ENCODE measurements at regions of chr19 and their contacts with region 1.

Region 1: DNA sequence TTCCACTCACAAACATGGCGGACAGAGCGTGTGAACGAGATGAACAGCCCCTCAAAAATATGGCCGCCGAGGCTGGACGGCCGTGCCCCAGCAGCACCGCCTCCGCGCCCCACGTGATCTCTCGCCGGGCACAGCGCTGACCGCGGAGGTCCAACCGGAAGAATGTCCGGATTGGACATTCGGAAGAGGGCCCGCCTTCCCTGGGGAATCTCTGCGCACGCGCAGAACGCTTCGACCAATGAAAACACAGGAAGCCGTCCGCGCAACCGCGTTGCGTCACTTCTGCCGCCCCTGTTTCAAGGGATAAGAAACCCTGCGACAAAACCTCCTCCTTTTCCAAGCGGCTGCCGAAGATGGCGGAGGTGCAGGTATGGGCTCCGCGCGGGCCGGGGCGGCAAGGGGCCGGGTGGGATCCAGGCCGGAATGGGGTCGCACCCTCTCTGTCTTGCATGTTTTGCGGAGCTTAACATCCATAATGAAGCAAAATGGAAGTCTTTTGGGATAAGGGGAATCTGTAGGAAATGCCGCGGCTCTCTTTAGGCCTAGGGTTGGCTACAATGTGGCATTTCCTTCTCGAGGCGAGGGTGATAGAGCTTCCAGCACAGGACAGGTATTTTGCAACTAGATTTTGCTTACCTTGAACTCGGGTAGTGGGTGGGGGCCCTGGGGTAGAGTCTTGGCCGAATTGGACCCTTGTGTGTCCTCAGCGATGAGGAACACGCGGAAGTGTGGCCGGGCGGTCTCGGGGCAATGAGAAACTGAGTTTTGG is at the start of gene RPL13A:
- DNase-seq: peak; percentile 99 to 100
- H3K4me3 ChIP-seq: peak within 1 kb of the TSS; percentile 96 to 100 (median 100)
- H3K27ac ChIP-seq: peak within 1 kb of the TSS; percentile 98
- H3K4me1 ChIP-seq: peaks cover 0 to 8% (median 2%) of the 10 kb centered on the region in 4 experiments; a peak in 3 of 7 replicates
- H3K27me3 ChIP-seq: no peaks in the 10 kb centered on the region
- CTCF ChIP-seq: no peak
- EP300 ChIP-seq: no peak
- POLR2A ChIP-seq: peak; percentile 98 to 99
- RAD21 ChIP-seq: no peak
- total RNA-seq, gene RPL13A: 3,305 and 3,520 TPM in 2 replicates

Region 2: GRCh38 chr19:49451430-49452181 is 35.9 kb before region 1 on chr19 and contains the start of gene PIH1D1:
- CTCF ChIA-PET with region 1: no interaction called
- POLR2A ChIA-PET with region 1: interaction called, 17 read pairs
- DNase-seq: peak; percentile 93 to 95
- H3K4me3 ChIP-seq: peak within 1 kb of the TSS; percentile 86 to 99 (median 96)
- H3K27ac ChIP-seq: peak within 1 kb of the TSS; percentile 69
- H3K4me1 ChIP-seq: peaks cover 0 to 14% (median 10%) of the 10 kb centered on the region in 4 experiments; a peak in 6 of 7 replicates
- H3K27me3 ChIP-seq: no peaks in the 10 kb centered on the region
- CTCF ChIP-seq: no peak
- EP300 ChIP-seq: no peak
- POLR2A ChIP-seq: peak; percentile 51 to 86
- RAD21 ChIP-seq: no peak
- total RNA-seq, gene PIH1D1: 146 and 155 TPM in 2 replicates

Region 3: DNA sequence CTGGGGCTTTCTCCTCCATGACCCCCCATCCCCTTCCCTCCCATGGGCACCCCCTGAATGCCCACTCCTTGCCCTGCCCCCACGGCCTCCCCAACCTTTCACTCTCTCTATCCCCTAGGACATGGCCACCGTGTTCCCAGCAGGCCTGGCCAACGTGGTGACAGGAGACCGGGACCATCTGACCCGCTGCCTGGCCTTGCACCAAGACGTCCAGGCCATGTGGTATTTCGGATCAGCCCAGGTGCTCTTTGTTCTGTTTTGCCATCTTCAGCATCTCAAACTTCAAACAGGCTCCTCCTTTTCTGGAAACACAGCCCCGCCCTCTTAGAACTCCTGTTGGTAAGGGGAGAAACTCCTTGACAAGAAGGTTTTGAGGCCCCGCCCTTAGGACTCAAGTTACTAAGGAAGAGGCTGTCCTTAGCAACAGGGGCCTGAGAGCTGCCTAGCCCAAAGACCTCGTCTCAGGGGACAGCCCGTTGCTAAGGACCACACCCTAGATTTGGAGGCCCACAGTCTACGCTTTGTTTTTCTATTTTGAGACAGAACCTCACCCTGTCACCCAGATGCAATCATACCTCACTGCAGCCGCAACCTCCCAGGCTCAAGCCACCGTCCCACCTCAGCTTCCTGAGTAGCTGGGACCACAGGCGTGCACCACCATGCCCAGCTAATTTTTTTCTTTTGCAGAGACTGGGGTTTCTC is 18.6 kb before region 1 on chr19:
- CTCF ChIA-PET with region 1: interaction called, 22 read pairs
- POLR2A ChIA-PET with region 1: interaction called, 50 read pairs
- DNase-seq: peak in 1 of 2 experiments; percentile 79
- H3K4me3 ChIP-seq: no peak overlapping the region
- H3K27ac ChIP-seq: peak overlapping the region; percentile 36; the same call in 1 of the 2 replicates
- H3K4me1 ChIP-seq: peaks cover 0 to 8% (median 3%) of the 10 kb centered on the region in 4 experiments; a peak in 6 of 7 replicates
- H3K27me3 ChIP-seq: no peaks in the 10 kb centered on the region
- CTCF ChIP-seq: no peak
- EP300 ChIP-seq: no peak
- POLR2A ChIP-seq: no peak
- RAD21 ChIP-seq: no peak

Region 4: DNA sequence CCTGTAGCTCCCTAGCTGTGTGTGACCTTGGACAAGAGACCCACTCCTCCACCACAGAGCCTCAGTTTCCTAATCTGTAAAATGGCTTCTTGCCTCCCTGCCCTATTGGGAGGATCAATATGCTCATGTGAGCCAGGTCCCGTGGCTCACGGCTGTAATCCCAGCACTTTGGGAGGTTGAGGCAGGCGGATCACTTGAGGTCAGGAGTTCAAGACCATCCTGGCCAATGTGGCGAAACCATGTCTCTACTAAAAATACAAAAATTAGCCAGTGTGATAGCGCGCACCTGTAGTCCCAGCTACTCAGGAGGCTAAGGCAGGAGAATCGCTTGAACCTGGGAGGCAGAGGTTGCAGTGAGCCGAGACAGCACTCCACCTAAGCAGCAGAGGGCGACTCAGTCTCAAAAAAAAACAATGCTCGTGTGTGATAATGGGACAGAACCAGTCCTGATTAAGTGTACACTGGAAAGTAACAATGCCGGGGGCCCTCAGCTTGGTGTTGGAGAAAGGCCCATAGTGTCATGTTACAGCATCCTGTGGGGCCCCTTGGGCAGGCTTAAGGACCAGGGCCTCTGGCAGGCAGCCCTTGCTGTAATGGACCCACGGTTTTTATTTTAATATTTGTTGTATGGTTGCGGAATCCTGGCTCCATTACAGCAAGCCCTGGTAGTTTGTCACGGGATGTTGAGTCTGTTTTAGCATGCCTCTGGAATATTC is 15.6 kb after region 1 on chr19:
- CTCF ChIA-PET with region 1: interaction called, 7 read pairs
- POLR2A ChIA-PET with region 1: interaction called, 18 read pairs
- DNase-seq: no peak
- H3K4me3 ChIP-seq: no peak overlapping the region
- H3K27ac ChIP-seq: no peak overlapping the region
- H3K4me1 ChIP-seq: peaks cover 0 to 22% (median 17%) of the 10 kb centered on the region in 4 experiments; a peak in 6 of 7 replicates
- H3K27me3 ChIP-seq: no peaks in the 10 kb centered on the region
- CTCF ChIP-seq: peak; percentile 40 to 45 (median 41); a peak in 3 of 4 replicates
- EP300 ChIP-seq: no peak
- POLR2A ChIP-seq: no peak
- RAD21 ChIP-seq: peak; percentile 55 to 59

Region 5: GRCh38 chr19:49533551-49534488 is 46.4 kb after region 1 on chr19:
- CTCF ChIA-PET with region 1: no interaction called
- POLR2A ChIA-PET with region 1: interaction called, 17 read pairs
- DNase-seq: peak in 1 of 2 experiments; percentile 96
- H3K4me3 ChIP-seq: peak overlapping the region; percentile 60 to 81 (median 72)
- H3K27ac ChIP-seq: no peak overlapping the region
- H3K4me1 ChIP-seq: peaks cover 0 to 9% (median 1%) of the 10 kb centered on the region in 4 experiments; a peak in 5 of 7 replicates
- H3K27me3 ChIP-seq: no peaks in the 10 kb centered on the region; a peak in 1 of 7 replicates
- CTCF ChIP-seq: peak; percentile 22 to 76 (median 53)
- EP300 ChIP-seq: no peak
- POLR2A ChIP-seq: no peak
- RAD21 ChIP-seq: no peak

Region 6: GRCh38 chr19:49580264-49581006 is 93.0 kb after region 1 on chr19 and contains the start of gene NOSIP:
- CTCF ChIA-PET with region 1: no interaction called
- POLR2A ChIA-PET with region 1: interaction called, 15 read pairs
- DNase-seq: peak; percentile 89 to 95
- H3K4me3 ChIP-seq: peak within 1 kb of the TSS; percentile 87 to 99 (median 92)
- H3K27ac ChIP-seq: peak within 1 kb of the TSS; percentile 51
- H3K4me1 ChIP-seq: peaks cover 2 to 19% (median 8%) of the 10 kb centered on the region in 4 experiments
- H3K27me3 ChIP-seq: no peaks in the 10 kb centered on the region
- CTCF ChIP-seq: no peak
- EP300 ChIP-seq: 0 out of 3 replicates have a peak, but pooled peaks of 1 of the 2 experiments have one; percentile 47
- POLR2A ChIP-seq: peak; percentile 95 to 99
- RAD21 ChIP-seq: no peak
- total RNA-seq, gene NOSIP: 85.1 and 93.8 TPM in 2 replicates

Region 7: DNA sequence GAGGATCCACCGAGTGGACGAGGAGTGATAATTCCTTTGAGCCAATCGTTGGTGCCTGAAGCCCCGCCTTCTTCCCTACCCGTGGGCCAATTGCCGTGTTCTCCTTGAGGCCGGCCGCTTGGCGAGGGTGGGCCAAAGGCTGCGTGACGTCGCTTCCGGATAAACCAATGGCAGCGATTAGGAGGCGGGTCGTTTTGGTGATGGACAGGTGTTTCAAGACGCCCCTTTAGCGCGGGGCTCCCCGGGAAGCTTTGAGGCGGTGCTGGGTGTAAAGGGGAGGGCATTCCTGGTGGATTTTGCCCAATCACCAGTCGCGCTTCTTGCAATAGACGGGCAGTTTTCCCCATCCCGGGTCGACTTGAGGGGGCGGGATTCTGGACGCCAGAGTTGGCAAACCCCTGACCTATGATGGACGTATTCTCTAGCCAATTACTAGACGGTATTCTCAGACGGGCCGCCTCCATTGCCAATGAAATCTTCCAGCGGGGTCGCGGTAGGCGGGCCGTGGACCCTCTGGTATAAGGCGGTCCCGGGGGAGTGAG is 189.3 kb after region 1 on chr19:
- CTCF ChIA-PET with region 1: no interaction called
- POLR2A ChIA-PET with region 1: interaction called, 11 read pairs
- DNase-seq: peak; percentile 99 to 100
- H3K4me3 ChIP-seq: peak overlapping the region; percentile 82 to 99 (median 86)
- H3K27ac ChIP-seq: peak overlapping the region; percentile 100
- H3K4me1 ChIP-seq: peaks cover 2 to 19% (median 11%) of the 10 kb centered on the region in 4 experiments
- H3K27me3 ChIP-seq: no peaks in the 10 kb centered on the region
- CTCF ChIP-seq: no peak
- EP300 ChIP-seq: no peak
- POLR2A ChIP-seq: no peak
- RAD21 ChIP-seq: no peak